Tibial artery (tissue), 4 donors: ENCODE measurements at regions of chr7 and their contacts with region 1.

Region 1: DNA sequence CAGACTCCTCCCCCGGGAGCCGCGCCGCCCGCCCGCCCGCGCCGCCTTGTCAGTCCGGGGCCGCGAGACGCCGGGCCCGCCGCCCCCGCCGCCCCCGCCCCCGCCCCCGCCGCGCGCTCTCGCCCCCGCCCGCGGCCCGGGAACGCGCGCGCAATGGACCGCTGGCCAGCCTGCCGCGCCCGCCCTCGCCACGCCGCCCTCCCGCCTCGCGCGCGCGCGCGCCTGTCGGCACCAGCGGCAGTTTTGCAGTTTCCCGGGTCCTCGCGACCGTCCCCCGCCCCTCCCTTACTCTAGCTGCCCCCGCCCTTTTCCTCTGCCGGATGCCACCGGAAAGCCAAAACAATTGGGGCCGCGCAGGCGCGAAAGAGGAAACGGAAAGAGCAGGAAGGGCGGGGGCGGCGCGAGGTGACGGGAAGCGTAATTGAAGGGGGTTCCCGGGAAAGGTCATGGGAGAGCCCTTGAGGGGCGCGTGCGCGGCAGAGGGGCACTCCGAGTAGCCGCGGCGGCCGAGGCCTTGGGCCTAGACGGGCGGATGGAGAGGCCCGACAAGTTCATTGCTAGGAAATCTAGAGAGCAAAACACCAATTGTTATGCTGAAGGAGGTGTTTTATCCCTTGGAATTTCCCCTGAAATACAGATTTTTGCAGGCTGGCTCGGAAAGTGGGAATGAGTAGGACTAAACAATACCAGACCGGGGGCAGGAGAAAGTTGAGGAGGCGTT is 400 bp upstream of the KBTBD2 start:
- DNase-seq: peak; percentile 96 to 99
- H3K4me3 ChIP-seq: peak overlapping the region; percentile 97 to 99
- H3K27ac ChIP-seq: peak overlapping the region; percentile 100
- H3K4me1 ChIP-seq: peaks cover 0 to 36% (median 21%) of the 10 kb centered on the region in 4 donors
- H3K27me3 ChIP-seq: no peaks in the 10 kb centered on the region
- CTCF ChIP-seq: no peak

Region 2: GRCh38 chr7:32490127-32490822 is 401.7 kb before region 1 on chr7 and contains the start of gene LSM5:
- intact Hi-C with region 1: loop called (anchors 5 kb)
- DNase-seq: peak; percentile 91 to 94
- H3K4me3 ChIP-seq: peak within 1 kb of the TSS; percentile 76 to 81
- H3K27ac ChIP-seq: peak within 1 kb of the TSS; percentile 79 to 84
- H3K4me1 ChIP-seq: peaks cover 0 to 21% (median 17%) of the 10 kb centered on the region in 4 donors
- H3K27me3 ChIP-seq: no peaks in the 10 kb centered on the region
- CTCF ChIP-seq: no peak

Region 3: GRCh38 chr7:32569388-32570289 is 322.3 kb before region 1 on chr7:
- intact Hi-C with region 1: no loop called
- DNase-seq: no peak
- H3K4me3 ChIP-seq: no peak overlapping the region
- H3K27ac ChIP-seq: no peak overlapping the region
- H3K4me1 ChIP-seq: no peaks in the 10 kb centered on the region
- H3K27me3 ChIP-seq: no peaks in the 10 kb centered on the region
- CTCF ChIP-seq: no peak

Region 4: DNA sequence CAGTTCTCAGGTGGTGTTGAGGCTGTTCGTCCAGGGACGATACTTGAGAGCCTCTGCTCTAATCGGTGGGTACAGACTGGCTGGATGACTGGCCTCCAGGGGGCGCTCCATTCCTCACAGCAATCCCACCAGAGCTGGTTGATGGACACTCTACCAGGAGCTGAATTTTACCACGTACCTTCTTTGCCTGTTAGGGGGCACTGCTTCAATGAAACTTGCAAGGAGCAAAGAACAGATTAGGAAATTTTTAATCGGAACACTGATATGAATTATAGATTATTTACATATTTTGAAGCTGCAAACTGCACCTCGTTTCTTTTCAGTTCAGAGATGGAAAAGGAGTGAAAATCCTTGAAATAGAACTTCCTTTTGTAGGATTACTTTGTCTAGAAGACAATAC is 45.3 kb before region 1 on chr7:
- intact Hi-C with region 1: loop called (anchors 10 kb)
- DNase-seq: peak; percentile 92 to 93
- H3K4me3 ChIP-seq: no peak overlapping the region
- H3K27ac ChIP-seq: no peak overlapping the region
- H3K4me1 ChIP-seq: peaks cover 0 to 8% (median 3%) of the 10 kb centered on the region in 4 donors
- H3K27me3 ChIP-seq: no peaks in the 10 kb centered on the region
- CTCF ChIP-seq: peak; percentile 82 to 87

Region 5: DNA sequence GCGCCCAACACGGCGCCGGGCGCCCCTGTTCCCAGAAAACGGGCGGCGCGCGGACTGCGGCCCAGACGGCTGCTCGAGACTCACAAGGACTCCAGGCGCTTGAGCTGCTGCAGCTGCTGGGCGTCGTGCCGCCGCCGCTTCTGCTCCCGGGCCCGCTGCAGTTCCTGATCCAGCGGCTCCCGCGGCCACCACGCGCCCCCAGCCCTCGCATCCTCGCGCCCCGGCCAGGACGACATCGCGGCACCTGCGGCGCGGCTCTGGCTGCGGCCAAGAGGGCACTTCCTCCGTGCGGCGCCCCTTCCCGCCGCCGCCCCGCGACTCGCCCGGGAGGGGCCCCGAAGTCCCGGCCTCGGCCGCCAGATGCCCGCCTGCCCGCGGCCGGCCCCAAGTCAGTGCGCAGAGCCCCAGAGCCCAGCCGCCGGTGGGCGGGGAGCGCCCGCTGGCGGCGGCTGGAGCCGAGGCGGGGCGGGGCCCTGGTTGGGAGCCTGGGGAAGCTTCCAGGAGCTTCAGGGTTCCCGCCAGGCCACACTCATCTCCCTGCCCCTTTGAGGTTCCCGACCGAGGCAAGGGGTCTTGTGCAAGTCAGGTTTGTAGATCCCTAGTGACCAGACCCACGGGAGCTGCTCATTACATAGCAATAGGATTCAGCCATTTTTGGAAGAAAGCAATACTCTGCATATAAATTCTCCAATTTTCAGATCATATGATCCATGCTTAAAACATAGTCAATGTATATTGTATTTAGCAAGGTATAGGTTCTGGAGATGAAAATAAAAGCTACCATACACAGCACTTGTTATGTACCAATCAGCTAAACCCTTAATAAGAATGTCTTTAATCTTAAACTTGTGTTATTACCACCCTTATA is 51.1 kb after region 1 on chr7:
- intact Hi-C with region 1: loop called (anchors 5 kb)
- DNase-seq: peak; percentile 68 to 89
- H3K4me3 ChIP-seq: peak overlapping the region; percentile 69 to 87
- H3K27ac ChIP-seq: peak overlapping the region; percentile 90 to 92
- H3K4me1 ChIP-seq: peaks cover 0 to 27% (median 8%) of the 10 kb centered on the region in 4 donors
- H3K27me3 ChIP-seq: no peaks in the 10 kb centered on the region
- CTCF ChIP-seq: peak; percentile 47 to 69